IMR-90 (cell line): ENCODE measurements at regions of chr20 and their contacts with region 1.

Region 1: DNA sequence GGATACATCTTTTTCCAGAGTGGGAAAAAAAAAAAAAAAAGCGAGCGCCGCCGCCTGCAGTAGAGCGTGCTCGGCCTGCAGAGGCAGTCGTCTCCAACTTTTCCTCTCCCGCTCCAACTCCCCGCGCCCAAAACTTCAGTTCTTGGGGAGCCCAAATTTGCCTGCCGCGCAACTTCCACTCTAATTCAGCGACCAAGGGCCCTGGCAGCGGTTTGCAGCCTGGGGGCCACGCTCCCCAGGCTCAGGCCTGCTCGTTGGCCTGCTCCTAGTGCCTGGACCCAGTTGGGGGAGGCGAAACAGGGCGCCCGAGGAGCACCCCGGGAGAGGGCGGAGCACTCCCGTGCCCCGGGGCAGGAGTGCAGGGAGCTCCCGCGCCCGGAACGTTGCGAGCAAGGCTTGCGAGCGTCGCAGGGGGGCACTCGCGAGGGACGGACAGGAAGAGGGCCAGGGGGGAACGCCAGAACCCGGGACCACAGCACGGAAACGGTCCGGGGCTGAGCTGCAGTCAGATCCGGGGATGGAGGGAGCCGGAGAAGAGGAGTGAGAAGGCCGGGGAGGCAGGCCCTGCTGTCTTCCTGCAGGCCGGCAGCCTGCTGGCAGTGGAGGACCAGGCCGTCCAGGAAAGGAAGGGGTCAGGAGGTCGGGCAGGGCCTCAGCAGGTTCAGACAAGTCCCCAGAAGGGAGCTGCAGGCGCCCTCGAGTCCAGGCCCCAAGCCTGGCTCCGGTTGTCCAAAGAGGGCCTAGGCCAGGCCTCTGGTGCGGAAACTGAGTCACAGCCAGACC is at the start of gene STX16:
- DNase-seq: peak; percentile 91
- ATAC-seq: peak; percentile 89
- H3K4me3 ChIP-seq: peak within 1 kb of the TSS; percentile 78
- H3K27ac ChIP-seq: peak within 1 kb of the TSS; percentile 90
- H3K4me1 ChIP-seq: peaks cover 8% of the 10 kb centered on the region
- H3K27me3 ChIP-seq: no peaks in the 10 kb centered on the region
- CTCF ChIP-seq: peak; percentile 53
- POLR2A ChIP-seq: peak; percentile 72; the same call in 1 of the 2 replicates
- RAD21 ChIP-seq: peak; percentile 48
- total RNA-seq, gene STX16: 26.9 and 29.4 TPM in 2 replicates

Region 2: GRCh38 chr20:58039274-58040092 is 611.5 kb before region 1 on chr20:
- CTCF ChIA-PET with region 1: no interaction called
- POLR2A ChIA-PET with region 1: no interaction called
- dilution Hi-C with region 1: no loop called
- in situ Hi-C with region 1: no loop called
- intact Hi-C with region 1: no loop called
- DNase-seq: no peak
- ATAC-seq: no peak
- H3K4me3 ChIP-seq: no peak overlapping the region
- H3K27ac ChIP-seq: no peak overlapping the region
- H3K4me1 ChIP-seq: no peaks in the 10 kb centered on the region
- H3K27me3 ChIP-seq: no peaks in the 10 kb centered on the region
- CTCF ChIP-seq: no peak
- POLR2A ChIP-seq: no peak
- RAD21 ChIP-seq: no peak

Region 3: DNA sequence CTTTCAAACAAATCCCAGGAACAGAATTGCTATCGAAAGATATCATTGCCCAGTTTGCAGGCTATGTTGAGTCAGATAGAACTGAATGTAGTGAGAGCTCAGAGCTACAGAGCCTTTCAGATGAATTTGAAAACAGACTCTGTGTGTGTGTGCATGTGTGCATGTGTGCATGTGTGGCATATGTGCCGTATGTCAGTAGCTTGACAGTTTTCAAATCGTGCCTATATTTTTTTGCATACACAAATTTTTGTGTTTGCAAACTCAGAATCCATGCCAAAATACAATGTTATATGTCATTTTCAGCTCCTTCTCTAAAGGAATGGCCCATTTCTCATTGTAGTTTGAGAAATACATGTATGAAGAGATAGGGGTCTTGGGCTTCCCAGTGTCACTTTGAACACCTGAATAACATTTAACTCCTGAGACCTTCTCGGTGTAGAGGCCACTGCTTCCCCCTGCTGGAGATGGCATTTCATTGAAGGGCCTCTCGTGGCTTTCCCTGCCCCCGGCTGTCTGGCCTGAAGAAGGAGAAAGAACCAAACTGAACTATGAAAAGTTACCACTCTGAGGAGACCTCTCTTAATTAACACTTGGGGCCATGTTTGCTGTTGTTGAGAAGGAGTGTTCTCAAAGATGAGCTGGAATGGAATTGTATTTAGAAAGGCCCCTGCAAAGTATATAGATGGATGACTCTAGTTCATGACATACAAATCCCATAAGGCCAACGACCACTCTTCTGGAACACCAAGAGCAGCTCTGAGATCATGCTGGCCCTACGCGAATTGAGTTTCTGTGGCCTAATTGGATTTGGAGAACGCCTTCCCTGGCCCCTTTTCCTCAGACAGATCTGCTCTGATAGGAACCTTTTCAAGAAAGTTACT is 203.2 kb before region 1 on chr20:
- CTCF ChIA-PET with region 1: no interaction called
- POLR2A ChIA-PET with region 1: no interaction called
- dilution Hi-C with region 1: no loop called
- in situ Hi-C with region 1: no loop called
- intact Hi-C with region 1: loop called (anchors 5 kb)
- DNase-seq: peak; percentile 58
- ATAC-seq: peak; percentile 90
- H3K4me3 ChIP-seq: no peak overlapping the region
- H3K27ac ChIP-seq: no peak overlapping the region
- H3K4me1 ChIP-seq: 0 out of 2 replicates have a peak, but pooled peaks cover 1% of the 10 kb centered on the region
- H3K27me3 ChIP-seq: no peaks in the 10 kb centered on the region
- CTCF ChIP-seq: peak; percentile 79
- POLR2A ChIP-seq: no peak
- RAD21 ChIP-seq: peak; percentile 85

Region 4: GRCh38 chr20:58515233-58516184 is 135.5 kb before region 1 on chr20 and contains the start of gene APCDD1L:
- CTCF ChIA-PET with region 1: no interaction called
- POLR2A ChIA-PET with region 1: no interaction called
- dilution Hi-C with region 1: no loop called
- in situ Hi-C with region 1: no loop called
- intact Hi-C with region 1: loop called (anchors 2 kb)
- DNase-seq: peak; percentile 69
- ATAC-seq: peak; percentile 85
- H3K4me3 ChIP-seq: peak within 1 kb of the TSS; percentile 58
- H3K27ac ChIP-seq: peak within 1 kb of the TSS; percentile 27; the same call in 1 of the 2 replicates
- H3K4me1 ChIP-seq: peaks cover 11% of the 10 kb centered on the region
- H3K27me3 ChIP-seq: peaks cover 16% of the 10 kb centered on the region; the same call in 1 of the 2 replicates
- CTCF ChIP-seq: no peak
- POLR2A ChIP-seq: no peak
- RAD21 ChIP-seq: peak; percentile 13; the same call in 1 of the 2 replicates
- total RNA-seq, gene APCDD1L: 2.2 and 2.5 TPM in 2 replicates

Region 5: GRCh38 chr20:58664331-58664730 is 13.4 kb after region 1 on chr20:
- CTCF ChIA-PET with region 1: interaction called, 3 read pairs
- POLR2A ChIA-PET with region 1: interaction called, 13 read pairs
- dilution Hi-C with region 1: no loop called
- in situ Hi-C with region 1: no loop called
- intact Hi-C with region 1: no loop called
- DNase-seq: no peak
- ATAC-seq: no peak
- H3K4me3 ChIP-seq: no peak overlapping the region
- H3K27ac ChIP-seq: no peak overlapping the region
- H3K4me1 ChIP-seq: peaks cover 2% of the 10 kb centered on the region; the same call in 1 of the 2 replicates
- H3K27me3 ChIP-seq: no peaks in the 10 kb centered on the region
- CTCF ChIP-seq: no peak
- POLR2A ChIP-seq: no peak
- RAD21 ChIP-seq: no peak

Region 6: DNA sequence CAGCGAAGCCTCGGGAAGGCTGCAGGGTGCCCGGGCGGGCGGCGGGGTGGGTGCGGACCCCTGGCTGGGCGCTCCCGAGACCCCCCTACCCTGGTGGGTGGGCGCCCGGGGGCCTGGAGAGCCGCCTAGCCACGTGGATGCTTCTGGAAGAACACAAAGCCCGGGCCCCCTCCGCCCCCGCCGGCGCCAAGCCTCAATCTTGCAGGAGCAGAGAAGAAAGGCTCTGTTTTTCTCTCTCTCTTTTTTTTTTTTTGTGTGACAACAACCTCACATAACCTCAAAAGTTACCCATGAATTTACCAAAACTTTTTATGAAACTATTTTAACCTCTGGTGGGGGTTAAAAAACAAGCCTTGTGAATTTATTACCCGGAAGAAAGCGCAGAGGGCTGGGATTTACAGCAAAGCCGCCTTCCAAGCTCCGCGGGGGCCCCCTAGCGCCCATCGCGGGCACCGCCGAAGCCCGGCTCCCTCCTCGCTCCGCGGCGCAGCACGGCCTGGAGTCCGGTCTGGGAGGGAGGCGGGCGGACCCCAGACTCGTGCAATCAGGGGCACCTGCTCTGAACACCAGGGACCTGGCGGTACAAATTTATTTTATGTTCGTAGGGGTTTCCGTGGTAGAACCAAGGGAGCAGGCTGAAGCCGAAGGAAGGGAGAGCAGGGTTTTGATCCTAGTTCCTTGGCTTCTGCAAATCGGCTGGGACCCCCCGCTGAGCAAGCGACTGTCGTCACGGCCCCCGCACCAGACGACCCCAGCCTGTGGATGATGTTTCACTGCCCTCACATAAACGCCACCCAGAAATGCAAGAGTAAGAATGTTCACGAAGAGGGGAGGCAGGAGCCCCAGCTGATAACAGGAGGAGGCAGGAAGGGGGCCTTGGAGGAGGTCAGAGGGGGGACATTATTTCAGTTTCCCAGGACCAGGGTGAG is 571.5 kb after region 1 on chr20:
- CTCF ChIA-PET with region 1: no interaction called
- POLR2A ChIA-PET with region 1: no interaction called
- dilution Hi-C with region 1: no loop called
- in situ Hi-C with region 1: no loop called
- intact Hi-C with region 1: loop called (anchors 5 kb)
- DNase-seq: peak; percentile 66
- ATAC-seq: peak; percentile 99
- H3K4me3 ChIP-seq: peak overlapping the region; percentile 33
- H3K27ac ChIP-seq: no peak overlapping the region
- H3K4me1 ChIP-seq: no peaks in the 10 kb centered on the region
- H3K27me3 ChIP-seq: peaks cover 44% of the 10 kb centered on the region
- CTCF ChIP-seq: peak; percentile 94
- POLR2A ChIP-seq: no peak
- RAD21 ChIP-seq: peak; percentile 92